OCI-LY7 (cell line): ENCODE measurements at regions of chr1 and their contacts with region 1.

Region 1: DNA sequence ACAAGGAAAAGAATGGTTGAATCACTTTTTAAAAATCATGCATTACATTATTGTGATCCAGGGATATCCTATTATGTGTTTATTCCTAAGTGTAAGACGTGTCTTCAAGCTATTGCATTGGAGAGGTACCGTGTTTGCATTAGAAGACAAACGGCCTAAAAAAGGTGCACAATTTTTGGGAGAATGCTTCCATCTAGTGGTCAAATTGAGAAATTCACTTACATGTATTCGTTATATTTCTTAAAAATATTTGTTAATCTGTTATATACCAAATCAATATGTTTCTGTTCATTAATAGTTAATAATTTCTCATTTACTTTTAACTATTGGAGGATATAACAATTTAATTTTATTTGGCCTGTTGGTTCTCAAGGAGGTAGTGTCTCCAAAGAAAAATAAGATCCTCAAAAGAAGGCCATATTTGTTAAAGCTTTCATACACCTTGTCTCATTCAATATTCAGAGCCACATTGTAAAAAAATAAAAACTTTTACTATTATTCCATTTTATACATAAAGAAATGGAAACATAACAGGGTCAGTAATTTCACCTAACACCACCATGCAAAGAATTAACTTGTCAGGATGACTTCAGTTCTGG is 40.5 kb upstream of the KCTD3 start:
- DNase-seq: peak; percentile 53
- H3K4me3 ChIP-seq: no peak overlapping the region
- H3K27ac ChIP-seq: no peak overlapping the region
- H3K4me1 ChIP-seq: no peaks in the 10 kb centered on the region
- CTCF ChIP-seq: peak; percentile 87

Region 2: DNA sequence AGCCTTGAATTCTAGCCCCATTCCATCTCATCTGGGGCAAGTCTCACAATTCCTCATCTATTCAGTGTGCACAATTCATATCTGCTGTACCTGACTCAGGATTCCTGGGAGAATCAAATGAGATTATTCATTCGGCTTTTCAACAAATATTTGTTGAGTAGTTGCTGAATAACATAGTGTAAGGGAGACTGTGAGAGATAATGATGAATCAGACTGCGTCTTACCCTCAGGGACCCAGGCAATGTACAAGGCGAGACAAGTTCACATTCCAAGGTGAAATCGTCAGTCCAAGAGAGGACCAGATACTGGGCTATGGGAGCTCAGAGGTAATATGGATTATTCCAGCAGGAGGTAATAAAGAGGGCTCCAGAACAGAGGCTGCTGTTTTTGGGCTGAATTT is 1313.5 kb before region 1 on chr1:
- CTCF ChIA-PET with region 1: no interaction called
- POLR2A ChIA-PET with region 1: no interaction called
- intact Hi-C with region 1: loop called (anchors 5 kb)
- DNase-seq: no peak
- H3K4me3 ChIP-seq: no peak overlapping the region
- H3K27ac ChIP-seq: no peak overlapping the region
- H3K4me1 ChIP-seq: no peaks in the 10 kb centered on the region
- CTCF ChIP-seq: no peak

Region 3: GRCh38 chr1:214660862-214661261 is 865.8 kb before region 1 on chr1:
- CTCF ChIA-PET with region 1: no interaction called
- POLR2A ChIA-PET with region 1: no interaction called
- intact Hi-C with region 1: loop called (anchors 10 kb)
- DNase-seq: no peak
- H3K4me3 ChIP-seq: no peak overlapping the region
- H3K27ac ChIP-seq: no peak overlapping the region
- H3K4me1 ChIP-seq: no peaks in the 10 kb centered on the region
- CTCF ChIP-seq: peak; percentile 53

Region 4: DNA sequence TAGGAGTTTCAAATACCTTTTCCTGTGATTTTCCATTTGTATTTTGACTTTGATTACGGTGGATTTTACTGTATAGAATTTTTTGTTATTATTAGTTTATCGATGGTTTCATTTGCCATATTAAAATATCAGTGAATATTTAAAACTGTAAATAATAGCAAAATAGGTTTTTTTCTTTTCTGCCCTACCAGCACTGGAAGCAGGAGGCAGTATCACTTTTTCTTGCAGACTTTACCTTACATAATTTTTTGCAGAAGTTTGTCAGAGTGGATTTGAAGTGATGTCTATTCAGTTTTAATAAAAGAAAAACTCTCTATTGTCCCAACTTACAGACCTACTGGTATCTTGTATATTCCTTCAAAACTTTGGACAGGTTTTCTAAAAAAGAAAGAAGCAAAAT is 710.0 kb before region 1 on chr1:
- CTCF ChIA-PET with region 1: no interaction called
- POLR2A ChIA-PET with region 1: no interaction called
- intact Hi-C with region 1: loop called (anchors 10 kb)
- DNase-seq: no peak
- H3K4me3 ChIP-seq: no peak overlapping the region
- H3K27ac ChIP-seq: no peak overlapping the region
- H3K4me1 ChIP-seq: no peaks in the 10 kb centered on the region
- CTCF ChIP-seq: no peak